ENCODE measurements at regions of chr15 and their contacts with region 1.

Region 1: GRCh38 chr15:90583471-90584252 is 53.9 kb downstream of the CRTC3 start:
- DNase-seq: no peak
- H3K4me3 ChIP-seq: no peak overlapping the region
- H3K27ac ChIP-seq: no peak overlapping the region
- H3K4me1 ChIP-seq: no peaks in the 10 kb centered on the region
- H3K27me3 ChIP-seq: no peaks in the 10 kb centered on the region
- CTCF ChIP-seq: no peak

Region 2: GRCh38 chr15:89278307-89278706 is 1305.4 kb before region 1 on chr15:
- CTCF ChIA-PET with region 1: interaction called, 13 read pairs
- POLR2A ChIA-PET with region 1: no interaction called
- intact Hi-C with region 1: no loop called
- DNase-seq: no peak
- H3K4me3 ChIP-seq: no peak overlapping the region
- H3K27ac ChIP-seq: no peak overlapping the region
- H3K4me1 ChIP-seq: no peaks in the 10 kb centered on the region
- H3K27me3 ChIP-seq: no peaks in the 10 kb centered on the region
- CTCF ChIP-seq: no peak

Region 3: GRCh38 chr15:90571063-90571541 is 12.6 kb before region 1 on chr15:
- CTCF ChIA-PET with region 1: interaction called, 14 read pairs
- POLR2A ChIA-PET with region 1: no interaction called
- intact Hi-C with region 1: no loop called
- DNase-seq: no peak
- H3K4me3 ChIP-seq: no peak overlapping the region
- H3K27ac ChIP-seq: no peak overlapping the region
- H3K4me1 ChIP-seq: no peaks in the 10 kb centered on the region
- H3K27me3 ChIP-seq: no peaks in the 10 kb centered on the region
- CTCF ChIP-seq: no peak

Region 4: GRCh38 chr15:90677807-90678790 is 94.4 kb after region 1 on chr15:
- CTCF ChIA-PET with region 1: no interaction called
- POLR2A ChIA-PET with region 1: no interaction called
- intact Hi-C with region 1: no loop called
- DNase-seq: no peak
- H3K4me3 ChIP-seq: no peak overlapping the region
- H3K27ac ChIP-seq: no peak overlapping the region
- H3K4me1 ChIP-seq: peaks cover 18% of the 10 kb centered on the region
- H3K27me3 ChIP-seq: no peaks in the 10 kb centered on the region
- CTCF ChIP-seq: no peak